Motor neuron (in vitro differentiated cells): ENCODE measurements at regions of chr18 and their contacts with region 1.

Region 1: GRCh38 chr18:67104700-67105284 is 411.7 kb downstream of the DSEL start:
- ATAC-seq: peak; percentile 58 to 100 (median 86)
- H3K4me3 ChIP-seq: no peak overlapping the region
- H3K27ac ChIP-seq: no peak overlapping the region
- H3K4me1 ChIP-seq: peaks cover 0 to 4% of the 10 kb centered on the region in 2 donors

Region 2: GRCh38 chr18:67183398-67183797 is 78.6 kb after region 1 on chr18:
- in situ Hi-C with region 1: loop called in 2 of 9 experiments (anchors 10 to 25 kb)
- ATAC-seq: peak in 1 of 8 experiments; percentile 36
- H3K4me3 ChIP-seq: no peak overlapping the region
- H3K27ac ChIP-seq: no peak overlapping the region
- H3K4me1 ChIP-seq: peaks cover 0 to 3% of the 10 kb centered on the region in 2 donors